Activated CD4-positive, alpha-beta T cell treated with anti-CD3 and anti-CD28 coated beads, Interleukin-2, amount 10 ng/mL, durations not matched to agents 7 days and 5 days (primary cell): ENCODE measurements at regions of chr2 and their contacts with region 1.

Region 1: GRCh38 chr2:64052468-64053241 is 33.4 kb upstream of the VPS54 start:
- DNase-seq: peak; percentile 31
- H3K4me3 Mint-ChIP-seq: no peak overlapping the region
- H3K27ac Mint-ChIP-seq: no peak overlapping the region
- H3K4me1 Mint-ChIP-seq: peaks cover 43% of the 10 kb centered on the region
- H3K27me3 Mint-ChIP-seq: no peaks in the 10 kb centered on the region

Region 2: GRCh38 chr2:63594660-63595059 is 458.0 kb before region 1 on chr2:
- CTCF ChIA-PET with region 1: no interaction called
- POLR2A ChIA-PET with region 1: no interaction called
- DNase-seq: no peak
- H3K4me3 Mint-ChIP-seq: no peak overlapping the region
- H3K27ac Mint-ChIP-seq: peak overlapping the region; percentile 31
- H3K4me1 Mint-ChIP-seq: peaks cover 22% of the 10 kb centered on the region
- H3K27me3 Mint-ChIP-seq: no peaks in the 10 kb centered on the region

Region 3: GRCh38 chr2:64062829-64063228 is 10.2 kb after region 1 on chr2:
- CTCF ChIA-PET with region 1: interaction called, 15 read pairs
- POLR2A ChIA-PET with region 1: no interaction called
- DNase-seq: no peak
- H3K4me3 Mint-ChIP-seq: no peak overlapping the region
- H3K27ac Mint-ChIP-seq: no peak overlapping the region
- H3K4me1 Mint-ChIP-seq: peaks cover 25% of the 10 kb centered on the region
- H3K27me3 Mint-ChIP-seq: no peaks in the 10 kb centered on the region

Region 4: DNA sequence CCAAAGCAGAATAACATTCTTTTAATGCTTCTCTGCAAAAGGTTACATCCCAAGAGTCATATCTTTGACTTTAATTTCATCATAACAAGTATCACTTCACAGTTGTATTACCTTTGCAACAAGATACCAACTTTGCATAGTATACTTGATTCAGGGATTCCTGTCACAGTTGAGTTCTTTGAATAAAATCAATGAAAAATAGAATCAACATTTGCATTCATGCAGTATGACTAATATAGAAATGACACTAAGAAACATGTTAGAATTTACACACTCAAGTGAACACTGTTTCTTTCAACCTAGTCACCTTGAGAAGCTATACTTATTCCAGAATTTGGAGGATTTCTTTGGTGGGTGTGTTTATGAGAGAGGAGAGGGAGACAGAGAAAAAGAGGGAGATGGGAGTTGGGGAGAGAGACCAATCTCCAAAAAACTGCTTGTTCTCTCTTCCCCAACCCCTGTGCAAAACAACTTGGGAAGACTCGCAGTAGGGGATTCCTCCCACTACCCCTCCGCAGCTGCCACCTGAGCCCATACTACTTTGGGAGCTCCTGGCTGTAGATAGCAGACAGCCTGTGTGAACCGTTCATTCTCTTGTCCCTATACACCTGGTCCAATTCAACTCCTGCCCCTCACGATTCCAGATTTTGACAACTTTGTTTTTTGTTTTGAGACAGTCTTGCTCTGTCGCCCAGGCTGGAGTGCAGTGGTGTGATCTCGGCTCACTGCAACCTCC is 33.9 kb after region 1 on chr2:
- CTCF ChIA-PET with region 1: no interaction called
- POLR2A ChIA-PET with region 1: no interaction called
- DNase-seq: no peak
- H3K4me3 Mint-ChIP-seq: no peak overlapping the region
- H3K27ac Mint-ChIP-seq: no peak overlapping the region
- H3K4me1 Mint-ChIP-seq: no peaks in the 10 kb centered on the region
- H3K27me3 Mint-ChIP-seq: peaks cover 7% of the 10 kb centered on the region

Region 5: DNA sequence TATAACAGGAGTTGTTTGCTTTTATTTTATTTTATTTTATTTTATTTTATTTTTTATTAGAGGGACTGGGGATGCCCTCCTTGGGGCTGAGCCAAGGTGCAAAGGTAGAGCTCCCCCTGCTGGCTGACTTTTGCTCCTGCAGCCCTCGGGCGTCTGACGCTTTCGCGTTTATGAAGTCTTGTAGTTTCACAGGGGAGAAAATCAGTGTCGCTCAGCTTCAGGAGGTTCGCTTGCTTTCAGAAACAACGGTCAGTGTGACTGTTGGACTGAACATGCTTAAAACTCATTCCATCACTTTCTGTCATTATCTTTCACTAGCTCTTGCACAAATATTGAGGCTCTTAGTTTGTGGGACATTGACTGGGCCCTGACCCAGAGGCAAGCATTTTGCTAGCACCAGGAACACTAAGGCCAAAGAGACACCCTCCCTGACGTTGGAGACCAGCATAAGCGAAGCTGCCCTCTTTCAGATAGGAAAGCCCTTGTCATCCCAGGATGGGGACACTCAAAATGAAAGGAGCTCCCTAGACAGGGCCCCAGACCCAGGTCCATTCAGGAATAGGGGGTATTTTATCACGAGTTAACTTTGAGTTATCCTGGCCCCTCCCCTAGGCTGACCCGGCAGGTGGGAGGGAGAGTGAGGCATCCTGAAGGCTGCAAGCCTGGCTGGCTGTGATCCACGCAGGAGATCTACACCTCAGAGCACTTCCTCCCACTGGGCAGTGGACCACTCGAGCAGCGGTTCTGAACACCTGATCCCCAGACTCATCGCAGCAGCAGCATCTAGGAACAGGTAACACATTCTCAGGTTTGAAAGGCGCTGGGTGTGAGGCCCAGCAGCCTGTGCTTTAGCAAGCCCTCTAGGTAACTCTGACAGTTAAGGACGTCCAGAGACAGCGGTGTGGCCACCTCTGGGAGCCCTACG is 435.7 kb after region 1 on chr2:
- CTCF ChIA-PET with region 1: interaction called, 14 read pairs
- POLR2A ChIA-PET with region 1: no interaction called
- DNase-seq: peak; percentile 83
- H3K4me3 Mint-ChIP-seq: no peak overlapping the region
- H3K27ac Mint-ChIP-seq: no peak overlapping the region
- H3K4me1 Mint-ChIP-seq: peaks cover 25% of the 10 kb centered on the region
- H3K27me3 Mint-ChIP-seq: peaks cover 30% of the 10 kb centered on the region